ENCODE measurements at regions of chr15 and their contacts with region 1.

Region 1: DNA sequence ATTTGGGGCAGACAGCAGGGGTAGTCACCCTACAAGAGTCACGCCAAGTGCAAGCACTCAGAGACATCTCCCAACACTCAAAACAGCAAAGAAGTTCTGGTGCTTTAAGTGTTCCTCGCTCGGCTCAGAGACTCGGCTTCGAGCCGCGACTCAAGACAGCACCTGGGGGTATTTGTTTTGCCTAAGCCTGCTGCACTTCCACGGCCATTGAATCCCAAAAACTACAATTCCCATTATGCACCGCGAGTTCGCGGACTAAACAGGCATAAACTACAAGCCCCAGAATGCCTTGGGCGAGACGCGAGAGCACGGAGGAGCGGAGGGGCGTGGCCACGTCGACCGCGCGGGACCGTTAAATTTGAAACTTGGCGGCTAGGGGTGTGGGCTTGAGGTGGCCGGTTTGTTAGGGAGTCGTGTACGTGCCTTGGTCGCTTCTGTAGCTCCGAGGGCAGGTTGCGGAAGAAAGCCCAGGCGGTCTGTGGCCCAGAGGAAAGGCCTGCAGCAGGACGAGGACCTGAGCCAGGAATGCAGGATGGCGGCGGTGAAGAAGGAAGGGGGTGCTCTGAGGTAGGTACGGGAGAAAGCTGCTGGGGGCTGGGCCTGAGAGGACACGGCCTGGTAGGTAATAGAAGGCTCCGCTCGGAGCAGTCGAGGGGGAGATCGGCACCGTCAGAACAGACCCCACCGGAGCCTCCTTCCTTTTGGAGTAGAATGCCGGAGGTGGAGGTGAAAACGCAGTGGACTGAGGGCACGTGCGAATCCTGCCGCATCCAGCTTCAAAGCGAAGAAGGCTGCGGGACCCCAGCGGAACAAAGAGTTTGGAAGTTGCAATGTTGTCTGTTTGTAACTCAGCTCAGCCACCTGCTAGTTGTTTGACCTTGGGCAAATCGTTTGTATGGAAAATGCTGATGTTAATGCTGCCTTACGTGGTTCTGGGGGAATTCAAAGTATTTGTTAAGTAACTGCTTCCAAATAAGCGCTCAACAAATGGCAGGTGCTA is at the start of gene BUB1B:
- DNase-seq: peak; percentile 82 to 96 (median 91)
- ATAC-seq: peak; percentile 98
- H3K4me3 ChIP-seq: peak within 1 kb of the TSS; percentile 61 to 71
- H3K4me3 Mint-ChIP-seq: no peak within 1 kb of the TSS
- H3K27ac ChIP-seq: no peak within 1 kb of the TSS
- H3K27ac Mint-ChIP-seq: no peak within 1 kb of the TSS
- H3K4me1 ChIP-seq: peaks cover 10% of the 10 kb centered on the region
- H3K4me1 Mint-ChIP-seq: no peaks in the 10 kb centered on the region
- H3K27me3 ChIP-seq: no peaks in the 10 kb centered on the region
- H3K27me3 Mint-ChIP-seq: no peaks in the 10 kb centered on the region
- CTCF ChIP-seq: no peak
- total RNA-seq, gene BUB1B: 0.47 to 1.2 TPM

Region 2: DNA sequence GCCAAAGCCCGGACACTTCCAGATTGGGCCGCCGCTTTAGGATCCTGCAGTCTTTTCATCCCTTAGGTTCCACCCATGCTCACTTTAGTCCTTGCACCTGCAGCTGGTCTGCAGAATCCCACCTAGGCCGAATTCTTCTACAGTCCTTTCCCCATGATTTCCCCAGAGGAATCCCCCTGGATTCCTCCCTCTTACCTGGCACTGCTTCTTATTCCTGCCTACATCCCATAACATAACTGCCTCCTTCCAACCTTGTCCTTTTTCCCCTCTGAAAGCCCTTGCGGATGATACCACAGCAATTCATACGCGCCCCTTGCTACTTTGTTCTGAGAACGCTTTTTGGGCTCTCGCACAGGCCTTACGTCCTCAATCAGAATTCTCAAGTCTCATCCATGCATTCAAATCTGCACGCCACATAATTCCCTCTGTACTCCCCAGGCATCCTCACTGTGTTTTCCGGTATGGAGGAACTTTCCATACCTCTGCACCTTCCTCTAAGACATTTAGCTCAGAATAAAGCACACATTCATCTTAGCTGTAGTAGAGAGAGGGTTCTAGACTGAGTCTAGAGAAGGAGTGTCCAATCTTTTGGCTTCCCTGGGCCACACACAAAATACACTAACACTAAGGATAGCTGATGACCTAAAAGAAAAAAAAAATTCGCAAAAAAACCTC is 226.5 kb before region 1 on chr15:
- CTCF ChIA-PET with region 1: no interaction called
- POLR2A ChIA-PET with region 1: no interaction called
- intact Hi-C with region 1: loop called in 1 of 2 experiments (anchors 5 kb)
- DNase-seq: peak in 1 of 9 experiments; percentile 30
- ATAC-seq: no peak
- H3K4me3 ChIP-seq: peak overlapping the region; percentile 79 to 82
- H3K4me3 Mint-ChIP-seq: peak overlapping the region; percentile 83
- H3K27ac ChIP-seq: peak overlapping the region in 1 of 2 experiments; percentile 47
- H3K27ac Mint-ChIP-seq: peak overlapping the region; percentile 5
- H3K4me1 ChIP-seq: peaks cover 7% of the 10 kb centered on the region
- H3K4me1 Mint-ChIP-seq: peaks cover 34% of the 10 kb centered on the region
- H3K27me3 ChIP-seq: no peaks in the 10 kb centered on the region
- H3K27me3 Mint-ChIP-seq: peaks cover 2% of the 10 kb centered on the region
- CTCF ChIP-seq: no peak

Region 3: GRCh38 chr15:40038638-40039543 is 122.1 kb before region 1 on chr15 and contains the start of gene SRP14:
- CTCF ChIA-PET with region 1: interaction called, 3 read pairs
- POLR2A ChIA-PET with region 1: no interaction called
- intact Hi-C with region 1: loop called (anchors 1 kb)
- DNase-seq: peak; percentile 86 to 96 (median 93)
- ATAC-seq: peak; percentile 94
- H3K4me3 ChIP-seq: peak within 1 kb of the TSS; percentile 92 to 99
- H3K4me3 Mint-ChIP-seq: peak within 1 kb of the TSS; percentile 99
- H3K27ac ChIP-seq: peak within 1 kb of the TSS; percentile 84 to 96
- H3K27ac Mint-ChIP-seq: peak within 1 kb of the TSS; percentile 99
- H3K4me1 ChIP-seq: peaks cover 16% of the 10 kb centered on the region
- H3K4me1 Mint-ChIP-seq: peaks cover 43% of the 10 kb centered on the region
- H3K27me3 ChIP-seq: no peaks in the 10 kb centered on the region
- H3K27me3 Mint-ChIP-seq: no peaks in the 10 kb centered on the region
- CTCF ChIP-seq: no peak
- total RNA-seq, gene SRP14: 133 to 135 TPM

Region 4: DNA sequence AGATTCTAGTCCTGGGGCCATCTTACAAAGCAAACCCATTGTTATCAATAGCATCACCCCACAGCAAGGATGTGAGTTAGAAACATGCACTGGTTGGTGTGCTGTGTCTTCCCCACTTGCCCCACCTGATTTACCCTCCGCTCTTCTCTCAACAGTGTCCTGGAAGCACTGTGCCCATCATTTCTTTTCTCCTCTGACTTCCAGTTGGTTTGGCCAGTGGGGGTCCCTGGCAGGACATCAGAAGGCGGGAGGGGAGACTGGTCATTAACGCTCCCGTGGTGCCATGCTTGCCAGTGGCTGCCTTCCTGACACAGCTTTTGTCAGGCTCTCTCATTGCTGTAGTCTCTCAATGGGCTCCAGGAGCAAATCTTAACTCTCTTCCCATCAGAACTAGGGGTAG is 11.7 kb before region 1 on chr15:
- CTCF ChIA-PET with region 1: no interaction called
- POLR2A ChIA-PET with region 1: no interaction called
- intact Hi-C with region 1: no loop called
- DNase-seq: peak in 1 of 9 experiments; percentile 27
- ATAC-seq: no peak
- H3K4me3 ChIP-seq: no peak overlapping the region
- H3K4me3 Mint-ChIP-seq: no peak overlapping the region
- H3K27ac ChIP-seq: no peak overlapping the region
- H3K27ac Mint-ChIP-seq: no peak overlapping the region
- H3K4me1 ChIP-seq: no peaks in the 10 kb centered on the region
- H3K4me1 Mint-ChIP-seq: no peaks in the 10 kb centered on the region
- H3K27me3 ChIP-seq: no peaks in the 10 kb centered on the region
- H3K27me3 Mint-ChIP-seq: no peaks in the 10 kb centered on the region
- CTCF ChIP-seq: no peak

Region 5: GRCh38 chr15:40382580-40383456 is 221.8 kb after region 1 on chr15 and contains the start of gene KNSTRN:
- CTCF ChIA-PET with region 1: no interaction called
- POLR2A ChIA-PET with region 1: no interaction called
- intact Hi-C with region 1: loop called in 1 of 2 experiments (anchors 2 kb)
- DNase-seq: peak; percentile 84 to 95 (median 93)
- ATAC-seq: peak; percentile 99
- H3K4me3 ChIP-seq: peak within 1 kb of the TSS; percentile 73 to 93
- H3K4me3 Mint-ChIP-seq: peak within 1 kb of the TSS; percentile 99
- H3K27ac ChIP-seq: peak within 1 kb of the TSS in 1 of 2 experiments; percentile 54
- H3K27ac Mint-ChIP-seq: peak within 1 kb of the TSS; percentile 81
- H3K4me1 ChIP-seq: peaks cover 13% of the 10 kb centered on the region
- H3K4me1 Mint-ChIP-seq: peaks cover 16% of the 10 kb centered on the region
- H3K27me3 ChIP-seq: no peaks in the 10 kb centered on the region
- H3K27me3 Mint-ChIP-seq: no peaks in the 10 kb centered on the region
- CTCF ChIP-seq: no peak
- total RNA-seq, gene KNSTRN: 3.8 to 5.4 TPM

Region 6: GRCh38 chr15:40754883-40755811 is 594.2 kb after region 1 on chr15 and contains the start of gene RMDN3:
- CTCF ChIA-PET with region 1: no interaction called
- POLR2A ChIA-PET with region 1: no interaction called
- intact Hi-C with region 1: loop called in 1 of 2 experiments (anchors 5 kb)
- DNase-seq: peak; percentile 84 to 96 (median 93)
- ATAC-seq: peak; percentile 95
- H3K4me3 ChIP-seq: peak within 1 kb of the TSS; percentile 99
- H3K4me3 Mint-ChIP-seq: peak within 1 kb of the TSS; percentile 94
- H3K27ac ChIP-seq: peak within 1 kb of the TSS; percentile 91 to 94
- H3K27ac Mint-ChIP-seq: peak within 1 kb of the TSS; percentile 94
- H3K4me1 ChIP-seq: peaks cover 6% of the 10 kb centered on the region
- H3K4me1 Mint-ChIP-seq: peaks cover 26% of the 10 kb centered on the region
- H3K27me3 ChIP-seq: no peaks in the 10 kb centered on the region
- H3K27me3 Mint-ChIP-seq: no peaks in the 10 kb centered on the region
- CTCF ChIP-seq: no peak
- total RNA-seq, gene RMDN3: 26.7 to 30.5 TPM